Endothelial cell of umbilical vein (primary cell): ENCODE measurements at regions of chr20 and their contacts with region 1.

Region 1: DNA sequence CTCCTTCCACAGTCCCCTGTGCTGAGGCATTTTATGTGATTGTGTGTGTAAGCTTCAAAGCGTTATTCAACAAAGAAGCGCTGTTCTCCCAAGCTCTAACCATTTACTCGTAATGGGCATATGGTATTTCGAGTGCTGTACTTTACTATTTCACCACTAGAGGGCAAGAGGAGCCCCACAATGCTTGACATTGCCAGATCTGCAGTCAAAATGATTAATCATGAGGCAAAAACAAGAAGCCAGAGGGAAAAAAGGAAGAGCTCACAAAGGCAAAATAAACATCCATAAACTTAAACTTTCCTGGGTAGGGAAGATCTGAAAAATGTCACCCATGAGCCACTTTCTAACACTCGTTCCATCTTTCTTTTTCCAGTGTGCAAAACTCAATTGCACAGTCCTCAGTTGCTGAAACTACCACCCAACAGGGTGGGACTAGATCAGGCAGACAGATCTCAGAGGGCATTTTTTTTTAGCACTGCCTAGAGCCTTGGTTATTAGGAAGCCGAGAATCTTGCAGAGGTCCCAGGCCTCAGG is 215.0 kb upstream of the PLCB4 start:
- DNase-seq: peak; percentile 90
- H3K4me3 ChIP-seq: no peak overlapping the region
- H3K27ac ChIP-seq: no peak overlapping the region
- H3K4me1 ChIP-seq: peaks cover 13% of the 10 kb centered on the region
- H3K27me3 ChIP-seq: no peaks in the 10 kb centered on the region
- CTCF ChIP-seq: peak; percentile 68 to 73
- POLR2A ChIP-seq: no peak

Region 2: DNA sequence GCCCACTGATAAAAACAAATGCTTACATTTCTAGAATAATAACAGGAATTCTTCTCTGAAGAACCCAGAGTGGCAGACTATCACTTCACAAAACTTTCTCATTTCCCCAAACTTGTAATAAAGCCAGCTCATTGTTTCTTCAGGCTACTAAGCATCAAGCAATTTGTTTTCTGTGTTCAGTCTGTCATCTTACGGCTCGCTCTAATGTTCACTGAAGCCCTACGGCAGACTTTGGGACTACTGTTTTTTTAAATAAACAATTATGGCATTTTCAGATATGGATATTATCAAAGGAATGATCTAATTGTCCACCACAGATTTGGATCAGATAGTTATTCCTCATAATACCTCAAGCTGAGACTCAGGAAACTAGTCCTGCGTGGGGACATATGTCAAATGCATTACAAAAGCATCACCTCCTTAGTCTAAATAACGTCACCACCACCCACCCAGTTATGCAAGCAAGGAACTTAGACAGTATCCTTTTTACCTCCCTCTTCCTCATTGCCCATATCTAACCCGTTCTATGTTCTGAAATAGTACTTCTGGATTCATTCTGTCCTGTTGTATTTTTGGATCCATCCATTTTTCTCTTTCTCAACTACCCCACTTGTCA is 306.7 kb before region 1 on chr20:
- CTCF ChIA-PET with region 1: no interaction called
- POLR2A ChIA-PET with region 1: no interaction called
- dilution Hi-C with region 1: no loop called
- intact Hi-C with region 1: no loop called
- DNase-seq: peak; percentile 51
- H3K4me3 ChIP-seq: no peak overlapping the region
- H3K27ac ChIP-seq: peak overlapping the region; percentile 19
- H3K4me1 ChIP-seq: peaks cover 22% of the 10 kb centered on the region
- H3K27me3 ChIP-seq: no peaks in the 10 kb centered on the region
- CTCF ChIP-seq: no peak
- POLR2A ChIP-seq: no peak

Region 3: DNA sequence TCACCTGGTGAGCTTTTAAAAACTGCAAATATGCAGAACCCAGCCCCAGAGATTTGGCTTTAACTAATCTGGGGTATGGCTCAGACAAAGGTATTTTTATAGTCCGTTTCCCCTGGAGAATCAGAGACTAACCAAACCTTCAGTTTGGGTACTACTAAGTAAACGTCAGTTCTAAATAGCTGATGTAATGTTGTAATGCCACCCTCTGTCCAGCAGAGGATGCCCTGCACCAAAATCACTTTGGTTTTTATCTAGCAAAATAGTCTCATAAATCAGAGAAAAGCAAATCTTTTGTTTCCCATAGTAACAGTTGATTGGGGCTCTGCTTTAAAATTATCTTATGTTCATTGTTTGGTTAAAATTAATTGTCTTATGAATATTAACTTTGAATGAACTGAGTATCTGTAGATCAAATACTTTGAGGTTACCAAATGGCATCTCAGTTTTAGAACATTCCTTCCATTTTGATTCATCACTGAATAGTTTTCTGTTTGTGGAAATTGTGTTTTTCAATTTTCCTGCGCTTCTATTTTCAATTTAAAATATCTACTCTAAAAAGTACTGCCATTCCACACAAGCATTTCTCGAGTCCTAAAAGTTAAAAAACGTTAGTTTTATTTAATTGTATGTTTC is 63.3 kb before region 1 on chr20:
- CTCF ChIA-PET with region 1: interaction called, 26 read pairs
- POLR2A ChIA-PET with region 1: no interaction called
- dilution Hi-C with region 1: no loop called
- intact Hi-C with region 1: loop called (anchors 1 kb)
- DNase-seq: peak; percentile 75
- H3K4me3 ChIP-seq: no peak overlapping the region
- H3K27ac ChIP-seq: no peak overlapping the region
- H3K4me1 ChIP-seq: no peaks in the 10 kb centered on the region
- H3K27me3 ChIP-seq: no peaks in the 10 kb centered on the region
- CTCF ChIP-seq: peak; percentile 71 to 85
- POLR2A ChIP-seq: no peak

Region 4: DNA sequence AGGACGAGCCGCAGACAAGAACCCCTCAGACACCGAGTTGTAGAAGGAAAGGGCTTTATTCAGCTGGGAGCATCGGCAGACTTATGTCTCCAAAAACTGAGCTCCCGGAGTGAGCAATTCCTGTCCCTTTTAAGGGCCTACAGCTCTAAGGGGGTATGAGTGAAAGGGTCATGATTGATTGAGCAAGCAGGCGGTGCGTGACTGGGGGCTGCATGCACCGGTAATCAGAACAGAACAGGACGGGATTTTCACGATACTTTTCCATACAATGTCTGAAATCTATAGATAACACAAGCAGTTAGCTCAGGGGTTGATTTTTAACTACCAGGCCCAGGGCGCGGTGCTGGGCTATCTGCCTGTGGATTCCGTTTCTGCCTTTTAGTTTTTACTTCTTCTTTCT is 11.3 kb before region 1 on chr20:
- CTCF ChIA-PET with region 1: interaction called, 33 read pairs
- POLR2A ChIA-PET with region 1: no interaction called
- dilution Hi-C with region 1: no loop called
- intact Hi-C with region 1: no loop called
- DNase-seq: no peak
- H3K4me3 ChIP-seq: no peak overlapping the region
- H3K27ac ChIP-seq: no peak overlapping the region
- H3K4me1 ChIP-seq: no peaks in the 10 kb centered on the region
- H3K27me3 ChIP-seq: no peaks in the 10 kb centered on the region
- CTCF ChIP-seq: no peak
- POLR2A ChIP-seq: no peak

Region 5: DNA sequence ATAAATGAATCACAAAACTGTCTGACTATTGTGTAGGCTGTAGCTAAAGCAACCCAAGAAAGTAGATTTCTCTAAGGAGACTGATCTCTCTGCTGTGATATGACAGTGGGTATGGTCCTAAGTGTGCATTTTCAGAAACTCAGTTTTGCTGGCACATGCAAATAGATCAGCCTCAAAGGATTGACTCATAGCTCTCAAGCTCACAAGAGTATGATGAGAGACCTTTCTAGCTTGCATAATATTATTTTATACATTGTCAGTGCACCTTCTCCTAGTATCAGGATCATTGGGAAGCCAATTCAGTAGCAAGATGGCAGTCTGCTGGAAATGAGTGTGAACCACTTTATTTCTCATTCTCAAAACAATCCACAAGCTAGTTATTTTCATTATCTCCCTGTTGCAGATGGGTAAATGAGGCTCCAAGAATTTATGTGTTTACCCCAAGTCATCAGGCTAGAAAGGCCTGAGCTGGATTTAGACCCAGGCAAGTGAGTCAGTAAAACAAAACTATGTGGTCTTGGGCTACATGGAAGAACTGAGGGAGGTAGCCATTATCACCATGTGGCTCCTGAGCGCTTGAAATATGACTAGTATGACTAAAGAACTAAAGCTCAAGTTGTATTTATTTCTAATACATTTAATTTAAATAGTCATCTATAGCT is 187.1 kb after region 1 on chr20:
- CTCF ChIA-PET with region 1: interaction called, 13 read pairs
- POLR2A ChIA-PET with region 1: no interaction called
- dilution Hi-C with region 1: no loop called
- intact Hi-C with region 1: no loop called
- DNase-seq: no peak
- H3K4me3 ChIP-seq: no peak overlapping the region
- H3K27ac ChIP-seq: no peak overlapping the region
- H3K4me1 ChIP-seq: no peaks in the 10 kb centered on the region
- H3K27me3 ChIP-seq: no peaks in the 10 kb centered on the region
- CTCF ChIP-seq: no peak
- POLR2A ChIP-seq: no peak

Region 6: DNA sequence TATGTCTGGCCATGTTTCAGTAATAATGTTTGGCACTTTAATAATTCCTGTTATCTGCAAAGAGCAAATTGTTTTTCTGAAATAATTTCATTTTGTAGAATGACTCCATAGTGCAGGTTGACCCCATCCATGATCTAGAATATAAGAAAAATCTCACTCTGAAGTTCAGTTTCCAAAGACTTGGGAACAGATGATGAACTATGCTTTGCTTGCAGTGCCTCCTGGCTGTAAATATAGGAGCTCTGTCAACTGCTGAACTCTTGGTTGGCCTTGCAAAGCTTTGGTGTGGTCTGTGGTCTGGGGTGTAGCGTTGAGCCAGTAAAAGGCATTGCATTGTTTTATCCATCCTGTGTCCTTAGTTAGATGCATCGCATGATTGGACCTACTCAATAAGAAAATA is 319.0 kb after region 1 on chr20:
- CTCF ChIA-PET with region 1: interaction called, 7 read pairs
- POLR2A ChIA-PET with region 1: no interaction called
- dilution Hi-C with region 1: no loop called
- intact Hi-C with region 1: loop called (anchors 10 kb)
- DNase-seq: no peak
- H3K4me3 ChIP-seq: no peak overlapping the region
- H3K27ac ChIP-seq: no peak overlapping the region
- H3K4me1 ChIP-seq: no peaks in the 10 kb centered on the region
- H3K27me3 ChIP-seq: no peaks in the 10 kb centered on the region
- CTCF ChIP-seq: no peak
- POLR2A ChIP-seq: no peak

Region 7: GRCh38 chr20:9359561-9360308 is 505.9 kb after region 1 on chr20:
- CTCF ChIA-PET with region 1: interaction called, 45 read pairs
- POLR2A ChIA-PET with region 1: no interaction called
- dilution Hi-C with region 1: no loop called
- intact Hi-C with region 1: loop called (anchors 1 kb)
- DNase-seq: peak; percentile 82
- H3K4me3 ChIP-seq: no peak overlapping the region
- H3K27ac ChIP-seq: no peak overlapping the region
- H3K4me1 ChIP-seq: no peaks in the 10 kb centered on the region
- H3K27me3 ChIP-seq: no peaks in the 10 kb centered on the region
- CTCF ChIP-seq: peak; percentile 31 to 42
- POLR2A ChIP-seq: no peak